Naive thymus-derived CD8-positive, alpha-beta T cell (primary cell): ENCODE measurements at regions of chr3 and their contacts with region 1.

Region 1: DNA sequence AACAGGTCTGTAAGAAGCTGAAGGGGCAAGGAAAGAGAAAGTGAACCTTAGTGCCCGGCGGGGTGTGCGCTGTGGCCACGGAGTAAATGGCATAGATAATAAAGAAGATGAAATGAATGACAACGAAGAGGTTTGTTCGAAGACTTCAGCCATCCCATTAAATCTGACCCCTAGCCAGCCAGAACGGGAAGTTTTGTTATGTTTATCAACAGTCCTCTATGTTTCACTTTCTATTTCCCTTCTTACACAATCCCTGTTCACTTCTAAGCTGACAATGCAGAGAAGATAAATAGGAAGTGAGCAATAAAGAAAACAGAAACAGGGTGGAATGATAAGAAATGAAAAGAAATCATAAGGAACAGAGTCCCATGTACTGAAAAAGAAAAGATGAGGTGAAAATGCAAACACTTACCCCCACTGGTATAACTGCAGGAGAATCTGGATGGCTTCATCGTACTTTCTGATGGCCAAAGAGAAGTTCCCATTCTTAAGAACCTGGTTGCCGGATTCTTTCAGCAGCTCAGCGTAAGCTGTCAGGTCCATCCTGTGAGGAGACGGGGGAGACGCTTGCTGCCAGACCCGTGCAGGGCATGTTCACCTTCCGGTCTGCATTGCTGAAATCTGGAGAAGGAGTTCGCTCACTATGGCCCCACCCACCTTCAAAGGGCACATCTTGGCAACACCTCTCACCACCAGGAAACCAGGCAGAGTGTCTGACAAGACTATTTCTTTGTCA is 36.8 kb downstream of the TRANK1 start:
- DNase-seq: peak; percentile 36 to 82 (median 62)
- ATAC-seq: peak; percentile 77 to 79
- H3K4me3 Mint-ChIP-seq: peak overlapping the region; percentile 87 to 100 (median 98)
- H3K27ac Mint-ChIP-seq: peak overlapping the region; percentile 94 to 100 (median 98)
- H3K4me1 Mint-ChIP-seq: peaks cover 26 to 81% (median 64%) of the 10 kb centered on the region in 4 donors
- H3K27me3 Mint-ChIP-seq: no peaks in the 10 kb centered on the region

Region 2: DNA sequence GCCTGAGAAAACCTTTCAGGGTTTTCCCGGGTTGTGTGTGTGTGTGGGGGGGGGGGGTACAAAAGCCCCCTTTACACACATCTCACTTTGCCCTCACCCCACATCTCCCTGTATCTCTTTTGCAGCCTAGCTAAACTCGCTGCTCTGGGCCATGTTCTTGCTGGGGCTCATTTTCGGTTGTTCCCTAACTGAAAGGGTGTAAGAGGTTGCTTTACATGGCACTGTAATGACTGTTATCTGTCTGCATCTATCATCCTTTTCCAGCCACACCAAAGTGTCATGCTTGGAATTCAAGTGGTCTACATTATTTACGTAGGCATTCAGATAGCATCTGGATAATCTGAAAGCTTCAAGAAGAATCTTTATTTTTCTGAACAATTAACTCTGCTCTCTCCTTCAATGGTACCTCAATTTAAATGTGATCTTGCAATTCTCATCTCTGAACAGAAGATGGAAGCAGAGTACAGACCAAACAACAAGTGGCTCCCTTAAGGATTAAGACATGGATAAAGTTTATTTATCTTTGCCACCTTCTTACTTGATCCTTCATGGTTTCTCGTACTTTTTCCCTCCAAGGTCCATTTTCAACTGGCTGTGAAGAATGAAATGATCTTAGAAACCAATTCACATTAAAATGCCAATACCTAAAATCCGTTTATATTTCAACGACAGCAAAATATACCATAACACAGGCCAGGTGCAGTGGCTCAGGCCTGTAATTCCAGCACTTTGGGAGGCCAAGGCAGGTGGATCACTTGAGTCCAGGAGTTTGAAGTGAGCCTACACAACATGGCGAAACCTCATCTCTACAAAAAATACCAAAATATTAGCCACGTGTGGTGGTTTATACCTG is 178.6 kb before region 1 on chr3:
- POLR2A ChIA-PET with region 1: no interaction called
- DNase-seq: peak in 3 of 10 donors; percentile 21 to 25 (median 23)
- ATAC-seq: no peak
- H3K4me3 Mint-ChIP-seq: no peak overlapping the region
- H3K27ac Mint-ChIP-seq: no peak overlapping the region
- H3K4me1 Mint-ChIP-seq: no peaks in the 10 kb centered on the region
- H3K27me3 Mint-ChIP-seq: peaks cover 0 to 4% (median 0%) of the 10 kb centered on the region in 5 donors

Region 3: GRCh38 chr3:36893137-36893557 is 14.9 kb before region 1 on chr3:
- POLR2A ChIA-PET with region 1: interaction called, 19 read pairs
- DNase-seq: peak in 4 of 10 donors; percentile 22 to 44 (median 32)
- ATAC-seq: peak; percentile 87 to 92
- H3K4me3 Mint-ChIP-seq: peak overlapping the region in 8 of 10 donors; percentile 8 to 52 (median 30)
- H3K27ac Mint-ChIP-seq: peak overlapping the region; percentile 57 to 94 (median 90)
- H3K4me1 Mint-ChIP-seq: peaks cover 28 to 87% (median 56%) of the 10 kb centered on the region in 4 donors
- H3K27me3 Mint-ChIP-seq: no peaks in the 10 kb centered on the region

Region 4: DNA sequence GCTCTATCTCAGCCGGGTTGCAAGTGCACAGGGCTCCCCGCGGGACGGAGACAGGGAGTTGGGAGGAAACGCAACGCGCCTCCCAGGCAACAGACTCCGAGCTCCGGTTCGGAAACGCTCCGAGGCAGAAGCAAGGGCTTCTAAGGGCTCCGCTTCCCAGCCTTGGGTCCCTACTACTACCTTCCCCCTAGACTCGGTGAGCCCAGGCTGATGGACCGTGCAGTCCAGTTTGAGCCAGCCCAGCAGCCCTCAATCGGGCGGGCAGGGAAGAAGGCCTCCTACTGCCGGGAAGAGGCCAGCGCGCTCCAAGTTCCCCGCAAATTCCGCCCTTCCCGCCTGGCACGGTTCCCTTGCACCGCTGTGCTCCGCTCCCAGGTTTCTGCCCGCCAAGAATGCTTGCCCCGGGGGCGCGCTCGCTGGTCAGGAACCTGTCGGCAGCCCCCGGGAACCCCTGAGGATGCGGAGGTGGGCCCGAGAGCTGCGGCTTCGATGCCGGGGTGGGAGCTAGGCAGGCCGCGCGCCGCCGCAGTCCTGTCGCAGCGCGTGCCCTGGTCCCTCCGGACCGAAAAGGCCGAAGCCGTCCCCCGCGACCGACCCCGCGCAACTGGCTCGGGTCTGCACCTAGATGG is 36.0 kb after region 1 on chr3:
- POLR2A ChIA-PET with region 1: interaction called, 23 read pairs
- DNase-seq: peak; percentile 7 to 64 (median 24)
- ATAC-seq: peak; percentile 43 to 50
- H3K4me3 Mint-ChIP-seq: peak overlapping the region; percentile 77 to 91 (median 82)
- H3K27ac Mint-ChIP-seq: peak overlapping the region in 9 of 10 donors; percentile 17 to 92 (median 85)
- H3K4me1 Mint-ChIP-seq: peaks cover 4 to 25% (median 18%) of the 10 kb centered on the region in 4 donors
- H3K27me3 Mint-ChIP-seq: no peaks in the 10 kb centered on the region